Activated naive CD4-positive, alpha-beta T cell treated with anti-CD3 and anti-CD28 coated beads, Interleukin-2, amount 10 ng/mL, durations not matched to agents 7 days and 5 days (primary cell): ENCODE measurements at regions of chr1 and their contacts with region 1.

Region 1: DNA sequence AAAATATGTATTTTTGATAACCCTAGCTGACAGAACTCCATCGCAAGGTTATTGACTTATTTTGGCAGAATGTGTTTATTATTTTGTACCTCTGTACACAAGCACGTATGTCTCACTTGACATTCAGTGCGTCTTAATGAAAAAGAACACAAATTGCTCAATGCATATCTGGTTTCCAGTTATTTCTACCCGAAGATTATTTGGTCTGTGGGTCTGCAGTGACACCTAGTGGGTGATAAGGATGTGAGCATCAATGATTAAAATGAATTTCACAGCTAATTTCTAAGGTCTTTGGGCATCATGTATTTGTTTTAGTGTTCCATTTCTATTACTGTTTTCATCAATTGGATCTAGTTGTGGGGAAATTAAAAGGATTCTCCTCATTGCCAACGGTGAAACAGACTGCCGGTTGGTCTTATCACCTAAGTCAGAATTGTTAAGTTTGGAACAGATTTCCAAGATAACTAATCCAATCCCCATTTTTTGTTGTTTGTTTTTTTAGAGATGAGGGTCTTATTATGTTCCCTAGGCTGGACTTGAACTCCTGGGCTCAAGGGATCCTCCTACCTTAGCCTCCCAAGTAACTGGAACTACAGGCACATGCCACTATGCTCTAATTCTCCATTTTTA is 13.9 kb downstream of the DDX20 start:
- DNase-seq: peak; percentile 69
- H3K4me3 Mint-ChIP-seq: no peak overlapping the region
- H3K27ac Mint-ChIP-seq: no peak overlapping the region
- H3K4me1 Mint-ChIP-seq: peaks cover 5% of the 10 kb centered on the region
- H3K27me3 Mint-ChIP-seq: no peaks in the 10 kb centered on the region

Region 2: GRCh38 chr1:111441573-111442192 is 327.9 kb before region 1 on chr1:
- CTCF ChIA-PET with region 1: interaction called, 10 read pairs
- DNase-seq: peak; percentile 80
- H3K4me3 Mint-ChIP-seq: no peak overlapping the region
- H3K27ac Mint-ChIP-seq: peak overlapping the region; percentile 38
- H3K4me1 Mint-ChIP-seq: peaks cover 43% of the 10 kb centered on the region
- H3K27me3 Mint-ChIP-seq: no peaks in the 10 kb centered on the region

Region 3: DNA sequence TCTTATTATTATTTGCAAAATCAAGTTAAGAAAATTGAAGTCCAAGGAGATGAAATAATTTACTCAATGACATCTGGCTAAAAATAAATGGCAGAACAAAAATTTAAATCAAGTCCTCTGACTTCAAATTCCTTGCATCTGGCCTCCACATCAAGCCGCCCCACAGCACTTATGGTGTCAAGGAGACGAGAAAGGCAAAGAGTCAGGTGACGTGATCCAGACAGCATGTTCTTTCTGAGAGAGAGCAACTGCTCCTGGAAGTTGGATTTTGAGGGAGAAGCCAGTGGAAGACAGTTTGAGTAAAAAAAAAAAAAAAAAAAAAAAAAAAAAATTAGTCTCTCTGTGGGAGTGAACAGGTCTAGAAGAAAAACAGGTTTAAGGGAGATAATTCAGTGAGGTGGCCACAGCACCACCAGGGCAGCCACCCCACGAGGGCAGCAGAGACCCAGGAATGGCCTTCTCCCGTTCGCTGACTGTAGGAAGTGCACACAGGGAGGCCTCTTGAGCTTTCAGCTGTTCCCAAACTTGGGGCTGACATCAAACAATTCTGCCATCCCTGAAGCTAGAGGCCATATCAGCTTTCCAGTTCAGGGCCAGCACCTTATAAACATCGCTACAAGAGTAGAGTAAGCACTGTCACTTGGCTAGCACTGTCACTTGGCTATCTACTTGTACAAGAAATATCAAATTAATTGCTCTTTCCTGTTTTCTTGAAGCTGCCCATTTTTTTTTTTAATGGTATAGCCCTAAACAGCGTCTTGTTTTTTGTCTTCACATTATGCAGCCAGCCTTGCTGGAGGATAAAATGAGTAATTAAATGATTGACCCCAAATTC is 288.0 kb before region 1 on chr1:
- CTCF ChIA-PET with region 1: interaction called, 28 read pairs
- DNase-seq: peak; percentile 79
- H3K4me3 Mint-ChIP-seq: no peak overlapping the region
- H3K27ac Mint-ChIP-seq: no peak overlapping the region
- H3K4me1 Mint-ChIP-seq: peaks cover 46% of the 10 kb centered on the region
- H3K27me3 Mint-ChIP-seq: peaks cover 21% of the 10 kb centered on the region

Region 4: GRCh38 chr1:111720274-111720976 is 49.2 kb before region 1 on chr1:
- CTCF ChIA-PET with region 1: interaction called, 31 read pairs
- DNase-seq: no peak
- H3K4me3 Mint-ChIP-seq: peak overlapping the region; percentile 5
- H3K27ac Mint-ChIP-seq: peak overlapping the region; percentile 50
- H3K4me1 Mint-ChIP-seq: peaks cover 8% of the 10 kb centered on the region
- H3K27me3 Mint-ChIP-seq: no peaks in the 10 kb centered on the region

Region 5: GRCh38 chr1:111747282-111747734 is 22.3 kb before region 1 on chr1:
- CTCF ChIA-PET with region 1: interaction called, 13 read pairs
- DNase-seq: peak; percentile 83
- H3K4me3 Mint-ChIP-seq: no peak overlapping the region
- H3K27ac Mint-ChIP-seq: no peak overlapping the region
- H3K4me1 Mint-ChIP-seq: peaks cover 10% of the 10 kb centered on the region
- H3K27me3 Mint-ChIP-seq: peaks cover 17% of the 10 kb centered on the region

Region 6: GRCh38 chr1:111801071-111801841 is 31.6 kb after region 1 on chr1:
- CTCF ChIA-PET with region 1: no interaction called
- DNase-seq: no peak
- H3K4me3 Mint-ChIP-seq: no peak overlapping the region
- H3K27ac Mint-ChIP-seq: no peak overlapping the region
- H3K4me1 Mint-ChIP-seq: no peaks in the 10 kb centered on the region
- H3K27me3 Mint-ChIP-seq: peaks cover 15% of the 10 kb centered on the region

Region 7: GRCh38 chr1:112006416-112006815 is 236.8 kb after region 1 on chr1:
- CTCF ChIA-PET with region 1: no interaction called
- DNase-seq: no peak
- H3K4me3 Mint-ChIP-seq: no peak overlapping the region
- H3K27ac Mint-ChIP-seq: no peak overlapping the region
- H3K4me1 Mint-ChIP-seq: no peaks in the 10 kb centered on the region
- H3K27me3 Mint-ChIP-seq: peaks cover 18% of the 10 kb centered on the region